Thyroid gland (tissue), 4 donors: ENCODE measurements at regions of chr16 and their contacts with region 1.

Region 1: GRCh38 chr16:75555707-75556430 is at the start of gene TMEM231:
- DNase-seq: peak; percentile 99
- H3K4me3 ChIP-seq: peak within 1 kb of the TSS; percentile 7 to 75 (median 36)
- H3K27ac ChIP-seq: peak within 1 kb of the TSS; percentile 71 to 79 (median 78)
- H3K4me1 ChIP-seq: peaks cover 0 to 6% of the 10 kb centered on the region in 2 donors
- H3K27me3 ChIP-seq: no peaks in the 10 kb centered on the region
- CTCF ChIP-seq: peak in 1 of 6 experiments; percentile 12
- POLR2A ChIP-seq: peak in 1 of 2 donors; percentile 70
- total RNA-seq, gene TMEM231: 3.6 to 22.2 (median 10.9) TPM

Region 2: GRCh38 chr16:75385507-75386152 is 170.2 kb before region 1 on chr16:
- intact Hi-C with region 1: no loop called
- DNase-seq: no peak
- H3K4me3 ChIP-seq: no peak overlapping the region
- H3K27ac ChIP-seq: no peak overlapping the region
- H3K4me1 ChIP-seq: peaks cover 4 to 10% of the 10 kb centered on the region in 2 donors
- H3K27me3 ChIP-seq: no peaks in the 10 kb centered on the region
- CTCF ChIP-seq: peak; percentile 58 to 94 (median 66)
- POLR2A ChIP-seq: no peak

Region 3: GRCh38 chr16:75624921-75625334 is 69.1 kb after region 1 on chr16:
- intact Hi-C with region 1: loop called (anchors 5 kb)
- DNase-seq: no peak
- H3K4me3 ChIP-seq: no peak overlapping the region
- H3K27ac ChIP-seq: no peak overlapping the region
- H3K4me1 ChIP-seq: peaks cover 10 to 11% of the 10 kb centered on the region in 2 donors
- H3K27me3 ChIP-seq: no peaks in the 10 kb centered on the region
- CTCF ChIP-seq: no peak
- POLR2A ChIP-seq: no peak